ENCODE measurements at regions of chr1 and their contacts with region 1.

Region 1: GRCh38 chr1:206693029-206693428 is 8.3 kb downstream of the MAPKAPK2 start:
- DNase-seq: peak; percentile 51 to 93
- H3K4me3 ChIP-seq: peak overlapping the region in 1 of 2 donors; percentile 42
- H3K27ac ChIP-seq: peak overlapping the region; percentile 89 to 92
- H3K4me1 ChIP-seq: peaks cover 36 to 80% of the 10 kb centered on the region in 2 donors
- H3K27me3 ChIP-seq: no peaks in the 10 kb centered on the region
- CTCF ChIP-seq: no peak

Region 2: GRCh38 chr1:206706298-206706791 is 13.3 kb after region 1 on chr1:
- intact Hi-C with region 1: loop called (anchors 1 kb)
- DNase-seq: peak; percentile 48 to 92
- H3K4me3 ChIP-seq: peak overlapping the region; percentile 9 to 10
- H3K27ac ChIP-seq: peak overlapping the region; percentile 74 to 75
- H3K4me1 ChIP-seq: peaks cover 25 to 42% of the 10 kb centered on the region in 2 donors
- H3K27me3 ChIP-seq: no peaks in the 10 kb centered on the region
- CTCF ChIP-seq: no peak